Breast epithelium (tissue), 4 donors: ENCODE measurements at regions of chrX and their contacts with region 1.

Region 1: GRCh38 chrX:122906726-122907125 is 277.4 kb upstream of the GRIA3 start:
- DNase-seq: no peak
- H3K4me3 ChIP-seq: no peak overlapping the region
- H3K27ac ChIP-seq: no peak overlapping the region
- H3K4me1 ChIP-seq: no peaks in the 10 kb centered on the region
- H3K27me3 ChIP-seq: no peaks in the 10 kb centered on the region
- CTCF ChIP-seq: no peak
- POLR2A ChIP-seq: no peak

Region 2: GRCh38 chrX:122238801-122239200 is 667.9 kb before region 1 on chrX:
- intact Hi-C with region 1: loop called (anchors 5 kb)
- DNase-seq: no peak
- H3K4me3 ChIP-seq: no peak overlapping the region
- H3K27ac ChIP-seq: no peak overlapping the region
- H3K4me1 ChIP-seq: no peaks in the 10 kb centered on the region
- H3K27me3 ChIP-seq: no peaks in the 10 kb centered on the region
- CTCF ChIP-seq: no peak
- POLR2A ChIP-seq: no peak

Region 3: GRCh38 chrX:122866530-122866929 is 40.2 kb before region 1 on chrX:
- intact Hi-C with region 1: no loop called
- DNase-seq: no peak
- H3K4me3 ChIP-seq: no peak overlapping the region
- H3K27ac ChIP-seq: no peak overlapping the region
- H3K4me1 ChIP-seq: no peaks in the 10 kb centered on the region
- H3K27me3 ChIP-seq: no peaks in the 10 kb centered on the region
- CTCF ChIP-seq: no peak
- POLR2A ChIP-seq: no peak